GM12878 (cell line): ENCODE measurements at regions of chr1 and their contacts with region 1.

Region 1: DNA sequence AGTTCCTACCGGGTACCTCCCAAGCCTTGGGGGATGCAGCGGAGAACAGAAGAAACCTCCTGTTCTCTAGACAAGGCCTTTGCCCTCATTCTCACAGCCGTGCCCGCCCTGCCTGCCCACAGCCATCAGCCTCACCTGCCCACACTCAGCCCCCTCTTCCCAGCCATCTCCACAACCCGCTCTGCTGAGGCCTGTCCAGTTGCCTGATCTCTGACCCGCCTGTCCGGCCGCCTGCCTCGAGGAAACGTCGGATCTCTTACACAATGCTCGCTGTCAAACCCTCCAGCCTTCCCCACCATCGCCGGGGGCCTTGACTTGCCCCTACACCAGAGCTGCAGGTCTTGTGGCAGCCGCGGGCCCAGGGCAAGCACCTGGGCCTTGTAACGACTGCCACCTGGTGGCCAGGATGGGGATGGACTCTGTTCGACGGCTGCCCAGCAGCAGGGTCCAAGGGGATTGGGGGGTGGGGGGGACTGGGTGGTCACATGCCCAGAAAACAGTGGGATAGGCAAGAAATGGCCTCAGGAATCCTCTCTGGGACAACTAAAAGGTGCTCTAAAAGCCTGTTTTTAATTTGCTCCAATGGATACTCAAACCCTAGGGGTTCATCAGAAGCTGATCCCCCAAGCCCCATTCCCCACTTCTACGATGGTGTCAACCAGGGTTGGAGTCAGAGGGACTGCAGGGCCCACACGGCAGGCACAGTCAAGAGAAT is 31.0 kb downstream of the SLC45A1 start:
- DNase-seq: no peak
- ATAC-seq: peak; percentile 88
- H3K4me3 ChIP-seq: no peak overlapping the region
- H3K27ac ChIP-seq: no peak overlapping the region
- H3K4me1 ChIP-seq: no peaks in the 10 kb centered on the region
- H3K27me3 ChIP-seq: no peaks in the 10 kb centered on the region
- CTCF ChIP-seq: peak; percentile 70 to 91 (median 78)
- EP300 ChIP-seq: no peak
- POLR2A ChIP-seq: no peak
- RAD21 ChIP-seq: peak; percentile 86

Region 2: GRCh38 chr1:7667625-7668218 is 681.2 kb before region 1 on chr1:
- CTCF ChIA-PET with region 1: interaction called, 4 read pairs
- POLR2A ChIA-PET with region 1: no interaction called
- RAD21 ChIA-PET with region 1: no interaction called
- SMC1A ChIA-PET with region 1: no interaction called
- in situ Hi-C with region 1: no loop called
- intact Hi-C with region 1: loop called (anchors 10 kb)
- DNase-seq: peak; percentile 11
- ATAC-seq: peak; percentile 93
- H3K4me3 ChIP-seq: no peak overlapping the region
- H3K27ac ChIP-seq: no peak overlapping the region
- H3K4me1 ChIP-seq: no peaks in the 10 kb centered on the region
- H3K27me3 ChIP-seq: no peaks in the 10 kb centered on the region; a peak in 1 of 4 replicates
- CTCF ChIP-seq: peak; percentile 98 to 99 (median 99); a peak in 5 of 6 replicates
- EP300 ChIP-seq: no peak
- POLR2A ChIP-seq: no peak
- RAD21 ChIP-seq: peak; percentile 95

Region 3: DNA sequence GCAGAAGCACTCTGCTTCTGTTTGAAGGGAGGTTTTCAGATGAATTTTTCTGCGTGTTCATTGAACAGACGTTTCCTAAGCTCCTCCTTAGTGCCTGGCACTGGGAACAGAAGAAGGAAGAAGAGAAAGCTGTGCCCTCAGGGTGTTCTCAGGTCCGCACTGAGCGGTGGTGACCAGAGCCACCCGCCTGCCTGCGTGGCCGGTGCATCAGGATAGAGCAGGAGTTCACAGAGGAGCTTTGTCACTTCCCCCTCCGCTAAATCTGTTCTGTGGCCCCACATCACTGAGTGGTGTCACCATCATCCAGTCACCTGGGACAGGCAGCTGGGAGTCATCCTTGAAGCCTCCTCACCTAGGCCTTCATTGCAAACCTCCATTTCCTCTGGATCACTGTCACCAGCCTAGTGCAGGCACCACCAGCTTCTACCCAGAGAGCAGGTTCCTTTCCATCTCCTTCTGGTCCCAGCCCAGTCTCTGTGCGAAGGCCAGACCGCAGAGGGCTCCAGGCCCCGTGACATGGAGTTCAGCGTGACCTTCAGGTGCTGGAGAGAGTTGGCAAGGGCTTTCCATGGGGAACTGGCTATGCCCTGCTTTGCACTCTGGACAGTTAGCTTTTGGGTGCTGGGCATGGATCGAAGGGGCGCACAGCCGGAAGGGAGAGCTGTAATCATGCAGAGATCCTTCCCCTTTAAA is 365.7 kb before region 1 on chr1:
- CTCF ChIA-PET with region 1: interaction called, 7 read pairs
- POLR2A ChIA-PET with region 1: no interaction called
- RAD21 ChIA-PET with region 1: no interaction called
- SMC1A ChIA-PET with region 1: no interaction called
- in situ Hi-C with region 1: no loop called
- intact Hi-C with region 1: loop called (anchors 2 kb)
- DNase-seq: no peak
- ATAC-seq: no peak
- H3K4me3 ChIP-seq: no peak overlapping the region
- H3K27ac ChIP-seq: no peak overlapping the region
- H3K4me1 ChIP-seq: peaks cover 4% of the 10 kb centered on the region; the same call in 1 of the 2 replicates
- H3K27me3 ChIP-seq: no peaks in the 10 kb centered on the region
- CTCF ChIP-seq: no peak
- EP300 ChIP-seq: no peak
- POLR2A ChIP-seq: no peak
- RAD21 ChIP-seq: no peak

Region 4: DNA sequence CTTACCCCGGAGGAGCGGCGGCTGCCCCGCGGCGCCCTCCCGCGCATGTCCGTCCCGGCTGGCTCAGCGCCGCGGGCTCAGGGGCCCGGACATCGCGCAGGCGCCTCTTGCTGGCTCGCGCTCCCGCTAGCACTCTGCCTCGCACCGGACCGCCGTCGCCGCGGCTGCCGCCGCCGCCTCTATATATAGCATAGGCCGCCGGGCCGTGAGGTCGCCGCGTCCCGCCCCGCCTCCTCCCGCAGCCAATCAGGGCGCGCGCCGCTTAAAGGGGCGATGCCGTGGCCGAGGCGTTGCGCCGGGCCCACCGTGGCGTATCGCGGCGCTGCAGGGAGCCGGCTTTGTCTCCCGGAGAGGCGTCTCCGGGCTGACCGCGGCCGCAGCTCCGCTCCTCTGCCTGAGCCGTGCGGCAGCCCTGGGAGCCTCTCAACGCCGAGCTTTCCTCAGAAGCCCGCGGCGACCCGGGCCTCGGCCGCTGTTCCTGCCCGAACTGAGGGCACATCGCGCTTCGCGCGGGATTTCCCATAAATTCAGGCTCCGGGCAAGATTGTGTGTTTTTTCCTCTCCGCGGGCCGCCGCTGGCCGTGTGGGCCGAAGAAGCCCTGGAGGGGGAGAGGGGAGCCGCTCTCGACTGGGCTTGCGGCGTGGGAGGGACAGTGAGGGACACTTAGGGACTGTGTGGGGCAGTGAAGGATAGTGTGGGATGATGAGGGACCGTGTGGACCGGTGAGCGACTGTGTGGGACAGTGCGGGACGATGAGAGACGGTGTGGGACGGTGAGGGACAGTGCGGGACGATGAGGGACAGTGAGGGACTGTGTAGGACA is 322.6 kb before region 1 on chr1 and contains the start of gene ERRFI1:
- CTCF ChIA-PET with region 1: interaction called, 19 read pairs
- POLR2A ChIA-PET with region 1: no interaction called
- RAD21 ChIA-PET with region 1: no interaction called
- SMC1A ChIA-PET with region 1: interaction called, 3 read pairs
- in situ Hi-C with region 1: no loop called
- intact Hi-C with region 1: no loop called
- DNase-seq: peak; percentile 28
- ATAC-seq: peak; percentile 97
- H3K4me3 ChIP-seq: peak within 1 kb of the TSS; percentile 75
- H3K27ac ChIP-seq: no peak within 1 kb of the TSS
- H3K4me1 ChIP-seq: peaks cover 5% of the 10 kb centered on the region
- H3K27me3 ChIP-seq: peaks cover 0 to 4% of the 10 kb centered on the region in 2 experiments; a peak in 1 of 4 replicates
- CTCF ChIP-seq: no peak
- EP300 ChIP-seq: no peak
- POLR2A ChIP-seq: peak; percentile 93
- RAD21 ChIP-seq: no peak
- polyA plus RNA-seq, gene ERRFI1: 1.6 to 2.4 TPM